Endothelial cell of umbilical vein (primary cell): ENCODE measurements at regions of chr17 and their contacts with region 1.

Region 1: DNA sequence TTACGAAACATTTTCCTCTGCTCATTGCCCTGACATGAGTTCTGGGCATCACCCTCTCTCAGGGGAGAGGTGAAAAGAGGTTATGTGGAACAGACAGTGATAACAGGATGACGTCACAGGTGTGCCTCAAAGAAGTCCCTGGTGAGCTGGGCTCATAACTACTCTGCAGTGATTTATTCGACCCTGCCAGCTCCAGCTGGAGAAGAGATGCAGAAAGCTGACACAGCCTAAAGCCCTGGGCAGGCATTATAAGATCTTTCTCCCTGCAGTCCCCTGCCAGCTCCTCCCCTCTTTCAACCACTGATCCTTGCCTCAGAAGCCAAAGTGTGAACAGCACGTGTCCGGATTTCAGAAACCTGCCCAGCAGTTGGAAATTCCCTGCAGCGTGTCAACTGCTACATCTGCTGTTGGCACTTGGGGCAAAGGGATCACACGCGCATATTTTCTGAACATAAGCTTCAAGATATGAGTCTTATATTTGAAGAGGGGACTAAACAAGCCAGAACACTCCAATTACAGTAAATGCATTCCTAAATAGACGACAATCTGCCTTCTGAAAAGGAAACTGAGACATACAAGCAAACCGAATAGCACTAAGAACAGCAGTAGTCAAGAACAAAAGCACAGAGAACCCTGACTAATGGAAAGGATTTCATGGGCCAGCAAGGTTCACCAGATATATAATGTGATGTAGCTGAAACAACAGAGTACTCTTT is 80.5 kb downstream of the SMG6 start:
- DNase-seq: peak; percentile 66
- H3K4me3 ChIP-seq: no peak overlapping the region
- H3K27ac ChIP-seq: no peak overlapping the region
- H3K4me1 ChIP-seq: peaks cover 3% of the 10 kb centered on the region
- H3K27me3 ChIP-seq: no peaks in the 10 kb centered on the region
- CTCF ChIP-seq: no peak
- POLR2A ChIP-seq: no peak

Region 2: DNA sequence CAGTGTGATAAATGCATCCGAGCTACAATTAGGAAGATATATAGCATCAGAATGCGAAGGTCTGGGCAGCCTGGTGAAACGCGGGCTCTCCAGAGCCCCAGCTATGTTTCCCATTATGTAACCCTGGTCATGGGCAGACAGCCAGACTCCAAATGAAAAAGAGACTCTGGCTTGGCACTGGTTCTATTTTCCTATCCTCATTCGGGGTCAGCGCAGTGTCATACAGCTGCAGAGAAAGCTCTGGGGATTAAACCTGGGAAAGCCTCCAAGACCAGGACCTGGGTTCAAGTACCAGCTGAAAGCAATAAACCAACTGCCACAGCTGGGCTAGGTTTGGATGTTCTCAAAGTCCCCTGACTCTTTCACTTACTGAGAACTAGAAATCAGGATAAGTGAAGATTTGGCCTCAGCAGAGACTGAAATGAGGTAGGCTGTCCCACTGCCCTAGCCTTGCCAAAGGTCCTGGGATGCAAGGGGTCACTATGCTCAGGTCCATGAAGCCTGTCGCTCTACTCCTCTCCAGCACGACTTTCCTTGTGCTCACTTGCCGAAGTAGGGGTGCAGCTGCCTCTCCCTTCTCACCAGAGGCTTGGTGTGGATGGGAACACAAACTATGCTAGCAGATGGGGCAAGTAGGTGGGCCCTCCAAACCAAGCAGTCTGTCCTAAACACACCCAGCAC is 43.3 kb before region 1 on chr17:
- CTCF ChIA-PET with region 1: interaction called, 11 read pairs
- POLR2A ChIA-PET with region 1: no interaction called
- dilution Hi-C with region 1: no loop called
- intact Hi-C with region 1: no loop called
- DNase-seq: peak; percentile 98
- H3K4me3 ChIP-seq: no peak overlapping the region
- H3K27ac ChIP-seq: peak overlapping the region; percentile 94
- H3K4me1 ChIP-seq: peaks cover 75% of the 10 kb centered on the region
- H3K27me3 ChIP-seq: no peaks in the 10 kb centered on the region
- CTCF ChIP-seq: no peak
- POLR2A ChIP-seq: peak; percentile 29

Region 3: DNA sequence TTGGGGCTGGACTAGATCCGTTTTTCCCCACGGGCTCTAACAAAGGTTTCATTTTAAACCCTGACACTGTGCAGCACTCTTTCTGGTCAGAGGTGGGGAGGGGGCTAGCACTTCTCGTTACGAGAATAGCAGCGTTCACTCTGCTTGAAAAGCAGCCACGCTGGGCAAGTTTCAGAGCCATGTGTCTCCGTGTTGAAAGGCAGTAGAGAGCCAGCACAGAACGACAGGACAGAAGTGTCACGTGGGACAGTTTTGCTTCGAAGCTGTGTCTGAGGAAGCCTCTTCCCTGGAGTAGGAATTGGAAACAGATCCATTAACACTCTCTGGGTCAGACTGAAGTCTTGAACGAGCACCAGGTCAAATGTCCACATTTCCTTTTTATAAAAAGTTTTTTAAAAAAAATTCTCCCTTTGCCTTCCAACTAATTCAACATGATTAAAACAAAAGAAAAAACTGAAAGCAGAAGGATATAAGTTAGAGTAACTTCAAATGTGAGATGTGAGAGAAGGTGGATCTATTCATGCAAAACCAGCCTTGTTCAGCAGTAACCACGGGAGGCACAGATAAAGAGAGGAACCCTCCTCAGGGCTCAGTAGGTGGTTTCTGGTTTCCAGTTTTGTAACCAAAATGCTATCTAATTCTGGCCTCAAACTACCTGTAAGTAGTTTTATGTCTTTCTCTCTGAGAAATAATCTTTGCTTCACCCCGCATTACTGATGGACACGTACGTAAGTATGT is 15.5 kb after region 1 on chr17:
- CTCF ChIA-PET with region 1: interaction called, 10 read pairs
- POLR2A ChIA-PET with region 1: no interaction called
- dilution Hi-C with region 1: no loop called
- intact Hi-C with region 1: no loop called
- DNase-seq: peak; percentile 52
- H3K4me3 ChIP-seq: no peak overlapping the region
- H3K27ac ChIP-seq: peak overlapping the region; percentile 53
- H3K4me1 ChIP-seq: peaks cover 30% of the 10 kb centered on the region
- H3K27me3 ChIP-seq: no peaks in the 10 kb centered on the region
- CTCF ChIP-seq: no peak
- POLR2A ChIP-seq: no peak

Region 4: GRCh38 chr17:2259769-2260536 is 36.9 kb after region 1 on chr17:
- CTCF ChIA-PET with region 1: no interaction called
- POLR2A ChIA-PET with region 1: no interaction called
- dilution Hi-C with region 1: no loop called
- intact Hi-C with region 1: no loop called
- DNase-seq: no peak
- H3K4me3 ChIP-seq: no peak overlapping the region
- H3K27ac ChIP-seq: no peak overlapping the region
- H3K4me1 ChIP-seq: no peaks in the 10 kb centered on the region
- H3K27me3 ChIP-seq: no peaks in the 10 kb centered on the region
- CTCF ChIP-seq: no peak
- POLR2A ChIP-seq: no peak